ENCODE measurements at regions of chr2 and their contacts with region 1.

Region 1: GRCh38 chr2:2530334-2530733 is 199.3 kb upstream of the MYT1L start:
- DNase-seq: no peak
- H3K4me3 ChIP-seq: no peak overlapping the region
- H3K27ac ChIP-seq: no peak overlapping the region
- H3K4me1 ChIP-seq: no peaks in the 10 kb centered on the region
- H3K27me3 ChIP-seq: peaks cover 0 to 6% of the 10 kb centered on the region in 2 donors
- CTCF ChIP-seq: no peak
- POLR2A ChIP-seq: no peak

Region 2: DNA sequence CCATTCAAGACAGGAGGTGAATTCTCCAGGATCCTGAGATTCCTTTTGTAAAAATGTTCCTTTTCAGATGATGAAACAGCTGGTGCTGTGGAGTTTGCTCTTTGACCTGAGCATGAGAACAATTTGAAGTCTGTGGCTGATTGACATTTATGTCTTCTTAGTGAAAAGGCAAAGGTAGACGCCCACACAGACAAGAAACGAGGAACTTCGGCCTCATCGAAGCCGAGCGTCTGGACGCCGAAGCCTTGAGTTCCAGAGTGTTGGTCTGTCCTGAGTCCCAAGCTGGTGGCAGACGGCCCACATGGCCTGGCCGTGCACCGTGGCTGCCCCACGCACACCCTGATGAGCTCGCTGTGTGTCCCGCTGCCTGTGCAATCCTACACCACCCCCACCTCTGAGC is 1600.4 kb before region 1 on chr2:
- intact Hi-C with region 1: loop called (anchors 10 kb)
- DNase-seq: no peak
- H3K4me3 ChIP-seq: no peak overlapping the region
- H3K27ac ChIP-seq: no peak overlapping the region
- H3K4me1 ChIP-seq: no peaks in the 10 kb centered on the region
- H3K27me3 ChIP-seq: no peaks in the 10 kb centered on the region
- CTCF ChIP-seq: no peak
- POLR2A ChIP-seq: no peak